IMR-90 (cell line): ENCODE measurements at regions of chr17 and their contacts with region 1.

Region 1: GRCh38 chr17:55996825-55997224 is 156.4 kb upstream of the ANKFN1 start:
- DNase-seq: peak; percentile 4
- ATAC-seq: no peak
- H3K4me3 ChIP-seq: no peak overlapping the region
- H3K27ac ChIP-seq: no peak overlapping the region
- H3K4me1 ChIP-seq: no peaks in the 10 kb centered on the region
- H3K27me3 ChIP-seq: no peaks in the 10 kb centered on the region
- CTCF ChIP-seq: peak; percentile 21; the same call in 1 of the 2 replicates
- POLR2A ChIP-seq: no peak
- RAD21 ChIP-seq: peak; percentile 31; the same call in 1 of the 2 replicates

Region 2: GRCh38 chr17:56313201-56313600 is 316.4 kb after region 1 on chr17:
- CTCF ChIA-PET with region 1: no interaction called
- POLR2A ChIA-PET with region 1: no interaction called
- dilution Hi-C with region 1: no loop called
- in situ Hi-C with region 1: no loop called
- intact Hi-C with region 1: loop called (anchors 1 kb)
- DNase-seq: no peak
- ATAC-seq: no peak
- H3K4me3 ChIP-seq: no peak overlapping the region
- H3K27ac ChIP-seq: no peak overlapping the region
- H3K4me1 ChIP-seq: no peaks in the 10 kb centered on the region; the same call in 1 of the 2 replicates
- H3K27me3 ChIP-seq: no peaks in the 10 kb centered on the region
- CTCF ChIP-seq: no peak
- POLR2A ChIP-seq: no peak
- RAD21 ChIP-seq: no peak

Region 3: GRCh38 chr17:56319517-56319916 is 322.7 kb after region 1 on chr17:
- CTCF ChIA-PET with region 1: interaction called, 6 read pairs
- POLR2A ChIA-PET with region 1: no interaction called
- dilution Hi-C with region 1: no loop called
- in situ Hi-C with region 1: no loop called
- intact Hi-C with region 1: loop called (anchors 1 kb)
- DNase-seq: peak; percentile 70
- ATAC-seq: peak; percentile 79
- H3K4me3 ChIP-seq: no peak overlapping the region
- H3K27ac ChIP-seq: no peak overlapping the region
- H3K4me1 ChIP-seq: peaks cover 3% of the 10 kb centered on the region
- H3K27me3 ChIP-seq: peaks cover 1% of the 10 kb centered on the region; the same call in 1 of the 2 replicates
- CTCF ChIP-seq: peak; percentile 66
- POLR2A ChIP-seq: no peak
- RAD21 ChIP-seq: peak; percentile 77

Region 4: GRCh38 chr17:56478836-56479447 is 482.1 kb after region 1 on chr17:
- CTCF ChIA-PET with region 1: no interaction called
- POLR2A ChIA-PET with region 1: no interaction called
- dilution Hi-C with region 1: no loop called
- in situ Hi-C with region 1: no loop called
- intact Hi-C with region 1: loop called (anchors 5 kb)
- DNase-seq: peak; percentile 25
- ATAC-seq: no peak
- H3K4me3 ChIP-seq: no peak overlapping the region
- H3K27ac ChIP-seq: no peak overlapping the region
- H3K4me1 ChIP-seq: no peaks in the 10 kb centered on the region
- H3K27me3 ChIP-seq: no peaks in the 10 kb centered on the region; the same call in 1 of the 2 replicates
- CTCF ChIP-seq: peak; percentile 48
- POLR2A ChIP-seq: no peak
- RAD21 ChIP-seq: peak; percentile 50

Region 5: DNA sequence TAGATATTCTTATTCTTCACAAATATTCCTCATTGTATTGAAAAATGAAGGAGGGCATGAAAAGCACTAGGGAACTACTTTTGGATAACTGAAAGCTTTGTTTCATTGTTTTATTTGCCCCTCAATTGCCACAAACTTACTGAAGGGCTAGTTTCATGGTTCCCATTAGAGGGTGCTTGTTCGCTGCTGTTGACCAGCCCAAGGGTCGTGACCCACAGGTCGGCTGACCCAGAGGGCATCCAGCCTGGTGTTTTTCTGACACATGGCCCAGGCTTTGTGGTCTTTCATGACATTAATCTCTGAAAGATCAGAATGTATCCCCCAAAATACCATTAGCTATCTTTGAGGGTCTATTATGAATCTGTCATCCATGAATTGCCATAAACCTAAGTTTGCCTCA is 867.1 kb after region 1 on chr17:
- CTCF ChIA-PET with region 1: no interaction called
- POLR2A ChIA-PET with region 1: no interaction called
- dilution Hi-C with region 1: no loop called
- in situ Hi-C with region 1: no loop called
- intact Hi-C with region 1: no loop called
- DNase-seq: no peak
- ATAC-seq: no peak
- H3K4me3 ChIP-seq: no peak overlapping the region
- H3K27ac ChIP-seq: no peak overlapping the region
- H3K4me1 ChIP-seq: peaks cover 4% of the 10 kb centered on the region
- H3K27me3 ChIP-seq: no peaks in the 10 kb centered on the region
- CTCF ChIP-seq: no peak
- POLR2A ChIP-seq: no peak
- RAD21 ChIP-seq: no peak